H1 (cell line): ENCODE measurements at regions of chr14 and their contacts with region 1.

Region 1: DNA sequence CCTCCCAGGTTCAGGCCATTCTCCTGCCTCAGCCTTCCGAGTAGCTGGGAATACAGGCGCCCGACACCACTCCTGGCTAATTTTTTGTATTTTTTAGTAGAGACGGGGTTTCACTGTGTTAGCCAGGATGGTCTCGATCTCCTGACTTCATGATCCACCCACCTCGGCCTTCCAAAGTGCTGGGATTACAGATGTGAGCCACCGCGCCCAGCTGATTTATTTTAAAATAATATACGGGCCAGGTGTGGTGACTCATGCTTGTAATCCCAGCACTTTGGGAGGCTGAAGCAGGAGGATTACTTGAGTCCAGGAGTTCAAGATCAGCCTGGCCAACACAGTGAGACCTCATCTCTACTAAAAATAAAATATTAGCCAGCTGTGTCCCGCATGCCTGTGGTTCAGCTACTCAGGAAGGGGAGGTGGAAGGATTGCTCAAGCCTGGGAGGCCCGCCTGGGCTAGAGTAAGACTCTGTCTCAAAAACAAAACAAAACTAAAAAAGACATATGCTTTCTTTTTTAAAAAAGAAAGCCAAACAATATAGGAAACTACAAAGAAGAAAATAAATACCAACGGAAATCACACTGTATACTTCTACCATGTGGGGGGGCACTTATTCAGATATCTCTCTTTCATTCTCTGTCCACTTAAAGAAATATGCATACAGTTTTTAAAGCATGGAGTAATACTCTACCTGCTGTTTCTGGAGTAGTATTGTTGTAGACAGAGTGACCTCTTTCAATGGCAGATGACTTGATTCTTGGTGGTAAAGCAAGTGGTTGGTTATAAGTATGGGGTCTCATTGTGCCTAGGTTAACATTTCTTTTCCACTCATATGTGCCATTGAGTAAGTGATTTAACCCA is 930 bp upstream of the MIA2 start:
- DNase-seq: no peak
- H3K4me3 ChIP-seq: no peak overlapping the region
- H3K27ac ChIP-seq: no peak overlapping the region
- H3K4me1 ChIP-seq: no peaks in the 10 kb centered on the region
- H3K27me3 ChIP-seq: no peaks in the 10 kb centered on the region
- CTCF ChIP-seq: no peak
- EP300 ChIP-seq: no peak
- POLR2A ChIP-seq: no peak
- RAD21 ChIP-seq: no peak

Region 2: DNA sequence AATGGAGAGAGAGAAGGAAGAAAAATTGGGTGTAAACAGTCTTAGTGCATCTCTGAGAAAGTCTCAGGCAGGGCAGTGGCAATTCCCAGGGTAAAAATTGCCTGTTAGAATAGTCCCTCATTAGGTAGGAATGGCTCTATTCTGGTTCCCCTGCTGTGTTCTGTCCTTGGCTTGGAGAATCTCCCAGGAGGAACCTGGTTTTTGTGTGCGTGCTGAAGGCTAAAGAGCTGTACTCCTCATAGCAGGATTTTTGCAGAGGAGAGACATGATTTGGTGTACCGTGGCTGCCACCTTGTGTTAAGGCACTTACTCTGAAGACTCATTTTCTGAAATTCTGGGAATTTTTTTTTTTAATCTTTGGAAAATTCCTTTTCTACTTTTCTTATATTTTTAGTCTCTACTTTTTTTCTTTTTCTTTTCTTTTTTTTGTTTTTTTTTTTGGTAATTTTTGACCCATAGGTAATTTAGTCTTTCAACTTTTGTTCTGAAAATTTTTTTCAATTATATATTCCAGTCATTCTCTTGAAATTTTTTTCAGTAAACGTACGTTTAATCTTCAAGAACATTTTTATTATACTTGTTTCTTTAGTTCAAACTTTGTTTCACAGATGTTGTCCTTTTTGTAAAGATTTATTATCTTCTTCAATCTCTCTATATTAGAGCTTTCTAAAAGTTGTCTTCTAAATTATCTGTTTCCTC is 135.6 kb after region 1 on chr14:
- CTCF ChIA-PET with region 1: interaction called, 12 read pairs
- POLR2A ChIA-PET with region 1: interaction called, 3 read pairs
- DNase-seq: peak; percentile 47 to 63
- H3K4me3 ChIP-seq: no peak overlapping the region
- H3K27ac ChIP-seq: no peak overlapping the region
- H3K4me1 ChIP-seq: peaks cover 8 to 10% (median 9%) of the 10 kb centered on the region in 4 experiments
- H3K27me3 ChIP-seq: no peaks in the 10 kb centered on the region
- CTCF ChIP-seq: peak in 2 of 3 experiments; percentile 58 to 65; a peak in 3 of 4 replicates
- EP300 ChIP-seq: no peak
- POLR2A ChIP-seq: no peak
- RAD21 ChIP-seq: peak; percentile 91 to 94

Region 3: DNA sequence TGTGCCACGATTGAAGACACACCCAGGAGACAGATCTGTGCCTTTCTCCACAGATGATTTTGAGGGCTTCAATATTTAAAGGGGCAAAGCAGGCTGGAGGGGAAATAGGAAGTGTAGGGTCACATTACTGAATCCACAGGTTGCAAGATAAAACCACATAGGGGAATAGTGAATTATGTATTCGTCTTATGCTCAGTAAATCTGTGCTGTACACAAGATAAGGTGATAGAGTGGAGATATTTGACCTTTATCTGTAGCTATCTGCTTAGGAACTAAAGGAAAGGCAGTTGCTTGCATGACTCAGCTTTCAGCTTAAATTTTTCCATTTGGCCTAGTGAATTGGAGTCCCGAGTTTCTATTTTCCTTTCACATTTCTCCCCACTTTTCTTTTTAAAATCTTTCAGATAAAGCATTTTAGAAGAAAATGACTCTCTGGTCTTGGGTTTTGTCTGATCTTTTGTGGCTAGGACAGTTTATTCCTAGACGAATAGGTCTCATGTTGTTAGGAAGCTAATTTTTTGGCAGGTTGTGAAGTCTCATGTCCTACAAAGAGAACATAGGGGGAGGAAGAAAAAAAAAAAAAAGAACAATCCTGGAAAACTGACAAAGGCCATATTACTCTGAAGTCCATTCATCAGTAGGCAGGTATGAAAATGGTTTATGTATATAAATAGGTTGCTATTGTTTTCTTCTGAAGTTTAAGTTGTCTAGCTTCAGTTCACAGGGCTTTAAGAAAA is 144.1 kb after region 1 on chr14:
- CTCF ChIA-PET with region 1: interaction called, 12 read pairs
- POLR2A ChIA-PET with region 1: interaction called, 3 read pairs
- DNase-seq: no peak
- H3K4me3 ChIP-seq: no peak overlapping the region
- H3K27ac ChIP-seq: no peak overlapping the region
- H3K4me1 ChIP-seq: no peaks in the 10 kb centered on the region; a peak in 2 of 7 replicates
- H3K27me3 ChIP-seq: no peaks in the 10 kb centered on the region
- CTCF ChIP-seq: no peak
- EP300 ChIP-seq: no peak
- POLR2A ChIP-seq: no peak
- RAD21 ChIP-seq: no peak

Region 4: GRCh38 chr14:39417014-39417413 is 184.2 kb after region 1 on chr14:
- CTCF ChIA-PET with region 1: interaction called, 12 read pairs
- POLR2A ChIA-PET with region 1: no interaction called
- DNase-seq: no peak
- H3K4me3 ChIP-seq: no peak overlapping the region
- H3K27ac ChIP-seq: no peak overlapping the region
- H3K4me1 ChIP-seq: 0 out of 7 replicates have a peak, but pooled peaks cover 0 to 1% (median 0%) of the 10 kb centered on the region in 4 experiments
- H3K27me3 ChIP-seq: no peaks in the 10 kb centered on the region
- CTCF ChIP-seq: peak in 2 of 3 experiments; percentile 36 to 62; a peak in 2 of 4 replicates
- EP300 ChIP-seq: no peak
- POLR2A ChIP-seq: no peak
- RAD21 ChIP-seq: peak; percentile 65 to 76

Region 5: GRCh38 chr14:39426605-39427004 is 193.8 kb after region 1 on chr14:
- CTCF ChIA-PET with region 1: interaction called, 21 read pairs
- POLR2A ChIA-PET with region 1: no interaction called
- DNase-seq: no peak
- H3K4me3 ChIP-seq: no peak overlapping the region
- H3K27ac ChIP-seq: no peak overlapping the region
- H3K4me1 ChIP-seq: peaks cover 0 to 3% (median 0%) of the 10 kb centered on the region in 4 experiments; a peak in 2 of 7 replicates
- H3K27me3 ChIP-seq: no peaks in the 10 kb centered on the region
- CTCF ChIP-seq: peak in 1 of 3 experiments; percentile 24; a peak in 1 of 4 replicates
- EP300 ChIP-seq: no peak
- POLR2A ChIP-seq: no peak
- RAD21 ChIP-seq: peak; percentile 29 to 48; a peak in 3 of 4 replicates